Prostate gland (tissue), 2 donors: ENCODE measurements at regions of chr12 and their contacts with region 1.

Region 1: DNA sequence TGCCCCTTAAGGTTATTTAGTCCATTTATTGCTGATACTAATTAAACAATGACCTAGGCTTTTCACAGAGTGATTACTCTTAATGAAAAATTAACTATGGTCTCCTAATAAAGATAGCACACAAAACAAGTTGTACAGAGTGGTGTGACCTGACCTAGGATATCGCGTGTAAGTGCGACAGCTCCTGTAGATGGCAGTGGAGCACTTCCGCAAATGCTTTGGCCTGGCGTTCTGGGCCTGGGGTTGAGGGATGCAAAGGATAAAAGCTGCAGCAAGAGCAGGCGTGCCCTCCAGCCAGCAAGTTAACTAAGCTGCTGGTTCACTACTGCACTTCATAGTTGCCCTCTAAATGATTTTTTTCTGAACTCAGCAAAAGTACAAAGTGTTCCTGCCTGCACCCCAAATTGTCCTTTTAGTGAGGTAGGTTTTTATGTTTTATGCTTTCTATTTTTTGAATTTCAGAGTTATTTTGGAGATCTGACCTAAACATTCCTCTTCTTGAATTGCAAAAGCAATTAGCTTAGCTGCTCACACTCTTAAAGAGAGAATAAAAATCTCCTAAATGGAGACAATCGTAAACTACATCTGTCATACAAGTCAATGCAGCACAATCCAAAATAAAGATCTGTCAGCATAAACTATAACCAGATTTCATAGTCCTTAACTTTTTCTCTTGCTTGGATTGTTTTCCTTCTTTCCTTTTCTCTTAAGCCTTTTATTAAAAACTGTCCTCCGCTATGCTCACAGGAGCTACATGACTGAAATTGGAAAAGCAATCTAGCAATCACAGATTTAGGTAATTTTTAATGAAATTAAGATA is 379.6 kb downstream of the LRIG3 start:
- DNase-seq: peak; percentile 56
- H3K4me3 ChIP-seq: no peak overlapping the region
- H3K27ac ChIP-seq: no peak overlapping the region
- H3K4me1 ChIP-seq: no peaks in the 10 kb centered on the region
- H3K27me3 ChIP-seq: no peaks in the 10 kb centered on the region
- CTCF ChIP-seq: peak; percentile 14 to 67 (median 56)
- POLR2A ChIP-seq: no peak

Region 2: DNA sequence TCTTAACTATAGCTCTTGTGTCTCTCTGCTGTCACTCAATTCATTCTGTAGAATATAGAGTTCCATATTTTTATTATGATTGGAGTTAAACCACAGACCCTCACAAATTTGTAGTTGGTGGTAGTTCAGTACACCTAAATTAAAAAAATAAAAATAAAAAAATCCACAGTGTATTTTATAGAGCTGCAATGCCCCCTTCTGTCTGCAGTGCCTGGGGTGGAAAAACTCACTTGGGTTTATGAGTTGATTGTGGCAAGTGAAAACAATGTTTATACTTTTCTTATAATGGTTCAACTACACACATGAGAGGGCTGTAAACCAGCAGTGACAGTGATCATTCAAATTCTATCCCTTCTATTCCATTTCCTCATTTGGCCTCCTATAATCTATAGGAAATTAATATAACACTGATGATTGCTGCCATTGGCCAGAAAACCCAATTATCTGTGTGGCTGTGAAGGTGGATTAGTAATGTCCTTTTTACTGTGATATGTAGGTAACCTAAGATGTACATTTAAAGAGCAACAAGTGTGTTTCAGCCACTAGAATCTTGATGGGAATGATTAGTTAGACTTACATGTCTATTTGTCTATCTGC is 546.5 kb after region 1 on chr12:
- intact Hi-C with region 1: loop called (anchors 2 kb)
- DNase-seq: no peak
- H3K4me3 ChIP-seq: no peak overlapping the region
- H3K27ac ChIP-seq: no peak overlapping the region
- H3K4me1 ChIP-seq: no peaks in the 10 kb centered on the region
- H3K27me3 ChIP-seq: no peaks in the 10 kb centered on the region
- CTCF ChIP-seq: peak in 3 of 4 experiments; percentile 49 to 62 (median 53)
- POLR2A ChIP-seq: no peak

Region 3: DNA sequence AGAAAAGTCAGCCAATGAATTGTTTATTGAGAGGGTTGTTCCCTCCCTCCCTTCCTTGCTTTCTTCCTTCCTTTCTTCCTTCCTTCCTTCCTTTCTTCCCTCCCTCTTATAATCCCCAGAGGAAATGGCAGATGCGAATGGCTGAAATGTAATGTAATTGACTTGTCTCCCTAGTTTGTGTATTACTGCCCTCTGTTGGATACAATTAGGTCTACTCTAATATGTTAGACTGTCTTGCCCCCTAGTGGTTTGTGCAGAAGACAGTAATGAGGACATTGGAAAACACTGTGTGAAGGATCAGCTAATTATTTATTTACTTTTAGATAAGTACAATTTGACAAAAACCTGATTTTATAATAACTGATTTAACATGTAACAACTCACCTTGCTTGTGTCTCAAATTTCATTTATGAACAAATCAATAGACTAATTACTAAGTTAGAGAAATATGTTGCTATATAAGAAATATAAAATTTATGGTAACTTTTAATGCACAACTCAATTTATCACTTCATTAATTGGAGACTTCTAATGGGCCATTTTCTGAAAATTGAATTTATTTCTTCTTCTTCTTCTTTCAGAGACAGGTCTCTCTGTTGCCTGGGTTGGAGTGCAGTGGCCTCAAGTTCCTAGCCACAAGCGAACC is 609.4 kb after region 1 on chr12:
- intact Hi-C with region 1: loop called (anchors 5 kb)
- DNase-seq: peak; percentile 22
- H3K4me3 ChIP-seq: no peak overlapping the region
- H3K27ac ChIP-seq: no peak overlapping the region
- H3K4me1 ChIP-seq: no peaks in the 10 kb centered on the region
- H3K27me3 ChIP-seq: no peaks in the 10 kb centered on the region
- CTCF ChIP-seq: peak; percentile 63 to 97 (median 94)
- POLR2A ChIP-seq: no peak